Naive thymus-derived CD4-positive, alpha-beta T cell (primary cell): ENCODE measurements at regions of chr19 and their contacts with region 1.

Region 1: DNA sequence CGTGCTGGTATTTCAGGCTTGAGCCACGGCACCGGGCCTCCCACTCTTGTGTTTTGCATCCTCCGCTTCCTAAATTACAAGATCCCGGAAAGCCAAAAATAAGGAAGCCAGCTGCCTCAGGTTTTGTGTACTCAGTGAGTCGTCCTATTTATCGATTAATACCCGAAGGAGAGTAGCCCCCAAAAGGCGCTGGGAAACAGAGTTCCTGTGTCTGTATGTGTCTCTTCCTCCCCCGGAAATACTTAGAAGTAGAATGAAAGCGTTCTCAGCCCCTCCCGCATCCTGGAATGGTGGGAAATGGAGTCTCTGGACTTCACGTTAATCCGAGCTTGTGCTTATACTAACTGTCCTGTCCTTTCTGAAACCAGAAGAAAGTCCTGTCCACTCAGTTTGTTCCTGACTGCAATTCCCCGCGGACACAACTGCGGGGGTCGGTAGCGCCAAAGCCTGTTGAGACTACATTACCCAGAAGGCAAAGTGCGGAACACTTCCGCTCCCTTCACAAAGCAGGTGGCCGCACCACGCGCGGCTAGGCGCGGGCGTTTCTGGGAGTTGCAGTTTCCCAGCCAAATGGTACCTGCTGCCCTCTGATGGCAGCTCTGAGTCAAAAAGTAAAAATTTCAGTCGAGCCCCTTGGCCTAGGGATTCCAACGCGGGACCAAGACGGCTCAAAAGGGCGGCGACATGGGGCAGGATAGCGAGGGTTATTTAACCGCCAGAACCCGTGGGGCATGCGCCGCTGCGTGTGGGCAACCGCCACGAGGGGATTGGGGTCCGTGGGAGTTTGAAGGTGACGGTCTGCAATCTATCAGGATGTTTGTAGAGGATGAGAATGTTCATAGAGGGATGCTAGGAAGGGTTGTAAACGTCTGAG is 2.2 kb upstream of the GSK3A start:
- DNase-seq: peak; percentile 76 to 93 (median 90)
- ATAC-seq: peak; percentile 51
- H3K4me3 ChIP-seq: peak overlapping the region; percentile 68
- H3K4me3 Mint-ChIP-seq: peak overlapping the region; percentile 91 to 98 (median 96)
- H3K27ac ChIP-seq: peak overlapping the region; percentile 73
- H3K27ac Mint-ChIP-seq: peak overlapping the region; percentile 84 to 99 (median 96)
- H3K4me1 ChIP-seq: peaks cover 28 to 38% of the 10 kb centered on the region in 2 donors
- H3K4me1 Mint-ChIP-seq: peaks cover 36 to 58% (median 54%) of the 10 kb centered on the region in 7 donors
- H3K27me3 ChIP-seq: no peaks in the 10 kb centered on the region
- H3K27me3 Mint-ChIP-seq: no peaks in the 10 kb centered on the region

Region 2: GRCh38 chr19:41959056-41960053 is 285.2 kb before region 1 on chr19 and contains the start of gene RABAC1:
- CTCF ChIA-PET with region 1: no interaction called
- POLR2A ChIA-PET with region 1: no interaction called
- intact Hi-C with region 1: loop called (anchors 1 to 2 kb)
- DNase-seq: peak; percentile 67 to 91 (median 86)
- ATAC-seq: peak; percentile 95
- H3K4me3 ChIP-seq: peak within 1 kb of the TSS; percentile 78
- H3K4me3 Mint-ChIP-seq: peak within 1 kb of the TSS; percentile 80 to 99 (median 91)
- H3K27ac ChIP-seq: peak within 1 kb of the TSS; percentile 81
- H3K27ac Mint-ChIP-seq: peak within 1 kb of the TSS; percentile 74 to 94 (median 90)
- H3K4me1 ChIP-seq: peaks cover 8 to 9% of the 10 kb centered on the region in 2 donors
- H3K4me1 Mint-ChIP-seq: peaks cover 17 to 22% (median 18%) of the 10 kb centered on the region in 7 donors
- H3K27me3 ChIP-seq: no peaks in the 10 kb centered on the region
- H3K27me3 Mint-ChIP-seq: no peaks in the 10 kb centered on the region
- total RNA-seq, gene RABAC1: 70.4 to 90.9 (median 78.1) TPM

Region 3: DNA sequence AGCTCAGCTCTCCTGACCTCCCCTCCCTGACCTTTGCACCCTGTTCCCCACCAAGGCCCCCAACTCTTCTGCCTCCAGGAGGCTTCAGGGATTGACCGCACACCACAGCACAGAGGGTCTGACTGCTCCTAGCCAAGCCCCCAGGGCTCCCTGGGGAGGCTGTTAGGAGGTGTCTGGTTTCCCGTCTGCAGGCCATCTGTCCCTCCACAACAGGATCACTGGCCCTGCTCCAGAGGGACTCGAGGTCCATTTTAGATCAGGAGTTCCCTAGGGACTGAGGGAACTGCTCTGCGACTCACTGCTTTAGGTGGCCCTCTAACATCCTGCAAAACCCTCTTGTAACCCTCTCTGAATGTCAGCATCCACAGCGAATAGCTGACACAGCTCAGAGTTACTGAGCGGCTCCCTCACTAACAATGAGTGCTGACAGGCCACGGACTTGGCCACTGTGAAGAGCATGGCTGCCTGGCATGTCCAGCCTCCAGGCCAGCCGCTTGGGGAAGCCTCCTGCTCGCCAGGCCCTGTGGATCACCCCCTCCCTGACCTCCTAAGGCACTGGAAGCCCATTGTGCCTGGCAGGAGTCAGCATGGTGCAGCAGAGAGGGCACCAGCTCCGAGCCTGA is 192.2 kb before region 1 on chr19:
- CTCF ChIA-PET with region 1: no interaction called
- POLR2A ChIA-PET with region 1: no interaction called
- intact Hi-C with region 1: no loop called
- DNase-seq: no peak
- ATAC-seq: no peak
- H3K4me3 ChIP-seq: no peak overlapping the region
- H3K4me3 Mint-ChIP-seq: no peak overlapping the region
- H3K27ac ChIP-seq: no peak overlapping the region
- H3K27ac Mint-ChIP-seq: no peak overlapping the region
- H3K4me1 ChIP-seq: peaks cover 0 to 5% of the 10 kb centered on the region in 2 donors
- H3K4me1 Mint-ChIP-seq: peaks cover 5 to 8% (median 7%) of the 10 kb centered on the region in 7 donors
- H3K27me3 ChIP-seq: no peaks in the 10 kb centered on the region
- H3K27me3 Mint-ChIP-seq: no peaks in the 10 kb centered on the region

Region 4: GRCh38 chr19:42176990-42177685 is 67.4 kb before region 1 on chr19:
- CTCF ChIA-PET with region 1: interaction called, 4 read pairs
- POLR2A ChIA-PET with region 1: no interaction called
- intact Hi-C with region 1: loop called in 1 of 2 experiments (anchors 2 kb)
- DNase-seq: peak; percentile 52 to 82 (median 67)
- ATAC-seq: peak; percentile 96
- H3K4me3 ChIP-seq: peak overlapping the region; percentile 41
- H3K4me3 Mint-ChIP-seq: peak overlapping the region in 1 of 10 donors; percentile 12
- H3K27ac ChIP-seq: no peak overlapping the region
- H3K27ac Mint-ChIP-seq: no peak overlapping the region
- H3K4me1 ChIP-seq: peaks cover 12 to 21% of the 10 kb centered on the region in 2 donors
- H3K4me1 Mint-ChIP-seq: peaks cover 16 to 24% (median 19%) of the 10 kb centered on the region in 7 donors
- H3K27me3 ChIP-seq: peaks cover 0 to 11% of the 10 kb centered on the region in 2 donors
- H3K27me3 Mint-ChIP-seq: peaks cover 13 to 34% (median 19%) of the 10 kb centered on the region in 5 donors

Region 5: GRCh38 chr19:42219812-42220750 is 24.5 kb before region 1 on chr19 and contains the start of gene ZNF526:
- CTCF ChIA-PET with region 1: interaction called, 24 read pairs
- POLR2A ChIA-PET with region 1: interaction called, 84 read pairs
- intact Hi-C with region 1: loop called (anchors 1 kb)
- DNase-seq: peak; percentile 92 to 97 (median 96)
- ATAC-seq: peak; percentile 88
- H3K4me3 ChIP-seq: peak within 1 kb of the TSS; percentile 72
- H3K4me3 Mint-ChIP-seq: peak within 1 kb of the TSS; percentile 95 to 99 (median 98)
- H3K27ac ChIP-seq: peak within 1 kb of the TSS; percentile 88
- H3K27ac Mint-ChIP-seq: peak within 1 kb of the TSS; percentile 88 to 98 (median 95)
- H3K4me1 ChIP-seq: peaks cover 37 to 43% of the 10 kb centered on the region in 2 donors
- H3K4me1 Mint-ChIP-seq: peaks cover 46 to 62% (median 55%) of the 10 kb centered on the region in 7 donors
- H3K27me3 ChIP-seq: no peaks in the 10 kb centered on the region
- H3K27me3 Mint-ChIP-seq: peaks cover 0 to 3% (median 0%) of the 10 kb centered on the region in 5 donors
- total RNA-seq, gene ZNF526: 8.6 to 25.2 (median 22.7) TPM

Region 6: DNA sequence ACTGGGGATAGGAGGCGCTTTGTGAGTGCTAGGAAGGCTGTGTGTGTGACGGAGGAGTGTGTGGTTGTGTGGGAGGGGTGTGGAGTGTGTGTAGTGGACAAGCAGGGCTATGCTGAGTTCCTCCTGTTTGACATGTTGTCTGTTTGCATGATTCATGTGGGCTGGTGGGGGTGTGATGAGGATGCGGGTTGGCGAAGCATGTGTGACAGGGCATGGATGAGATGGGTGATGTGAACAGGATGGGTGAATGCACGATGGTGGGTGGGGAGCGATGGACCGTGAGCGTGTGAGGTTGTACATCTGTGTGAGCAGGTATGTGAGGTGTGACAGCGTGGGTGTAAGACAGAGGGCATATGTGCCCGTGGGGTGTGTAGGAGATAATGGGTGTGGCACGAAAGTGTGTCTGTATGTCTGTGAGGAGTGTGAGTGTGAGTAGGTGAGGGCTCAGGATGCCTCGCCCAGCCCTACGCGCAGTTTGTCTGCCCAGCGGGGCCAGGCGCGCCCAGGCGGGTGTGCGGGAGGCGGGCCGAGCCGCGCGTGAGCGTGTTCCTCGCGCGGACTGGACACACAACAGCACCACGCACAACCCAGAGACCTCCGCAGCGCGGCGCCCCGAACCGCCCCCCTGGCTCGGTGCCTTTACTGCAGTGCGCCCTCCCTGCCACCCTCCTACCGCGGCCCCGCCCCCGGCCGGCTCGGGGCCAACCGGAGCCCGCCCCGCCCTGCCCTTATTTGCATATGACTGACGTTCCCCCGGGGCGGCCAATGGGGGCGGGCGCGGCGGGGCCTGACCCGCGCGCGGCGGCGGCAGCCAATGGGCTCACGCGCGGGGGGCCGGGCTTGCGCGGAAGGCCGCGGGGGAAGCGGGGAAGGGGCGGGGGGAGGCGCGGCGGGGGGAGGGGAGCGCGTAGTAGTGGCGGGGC is 38.8 kb after region 1 on chr19:
- CTCF ChIA-PET with region 1: interaction called, 25 read pairs
- POLR2A ChIA-PET with region 1: interaction called, 25 read pairs
- intact Hi-C with region 1: loop called (anchors 1 kb)
- DNase-seq: peak; percentile 93 to 97 (median 95)
- ATAC-seq: peak; percentile 83
- H3K4me3 ChIP-seq: peak overlapping the region; percentile 50
- H3K4me3 Mint-ChIP-seq: peak overlapping the region in 1 of 10 donors; percentile 0
- H3K27ac ChIP-seq: peak overlapping the region; percentile 83
- H3K27ac Mint-ChIP-seq: no peak overlapping the region
- H3K4me1 ChIP-seq: peaks cover 42 to 45% of the 10 kb centered on the region in 2 donors
- H3K4me1 Mint-ChIP-seq: peaks cover 22 to 44% (median 32%) of the 10 kb centered on the region in 7 donors
- H3K27me3 ChIP-seq: no peaks in the 10 kb centered on the region
- H3K27me3 Mint-ChIP-seq: no peaks in the 10 kb centered on the region

Region 7: DNA sequence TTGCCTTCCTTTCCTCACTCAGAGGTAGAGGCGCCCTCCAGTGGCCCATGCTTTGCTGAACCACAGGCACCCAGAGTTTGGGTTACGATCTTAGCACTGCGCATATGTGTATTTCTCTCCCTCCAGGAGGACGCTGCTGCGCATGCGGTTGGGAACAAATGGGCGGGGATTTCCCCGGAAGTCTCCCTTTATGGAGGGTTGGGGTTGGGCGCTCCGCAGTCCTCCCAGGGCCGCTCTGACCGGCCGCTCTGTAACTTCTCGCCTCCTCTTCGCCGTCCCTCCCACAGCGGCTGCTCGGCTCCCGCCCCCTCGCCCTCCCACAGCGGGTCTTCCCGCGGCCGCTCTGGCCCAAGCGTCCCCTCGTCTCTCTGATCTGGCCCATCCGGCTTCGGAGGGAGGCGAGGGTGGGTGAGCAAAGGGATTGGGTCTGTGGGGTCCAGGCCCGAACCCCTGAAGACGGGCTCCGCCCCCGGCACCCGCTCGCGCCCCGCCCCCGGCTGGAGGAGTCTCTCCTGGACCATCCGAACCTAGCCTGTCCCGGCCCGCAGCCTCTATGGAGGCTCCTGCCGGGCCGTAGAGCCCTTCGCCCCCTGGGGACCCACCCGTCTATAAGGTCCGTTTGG is 80.8 kb after region 1 on chr19 and contains the start of gene MEGF8:
- CTCF ChIA-PET with region 1: no interaction called
- POLR2A ChIA-PET with region 1: no interaction called
- intact Hi-C with region 1: loop called (anchors 1 kb)
- DNase-seq: peak; percentile 86 to 99 (median 97)
- ATAC-seq: peak; percentile 96
- H3K4me3 ChIP-seq: peak within 1 kb of the TSS; percentile 95
- H3K4me3 Mint-ChIP-seq: peak within 1 kb of the TSS; percentile 89 to 96 (median 94)
- H3K27ac ChIP-seq: peak within 1 kb of the TSS; percentile 84
- H3K27ac Mint-ChIP-seq: peak within 1 kb of the TSS; percentile 51 to 93 (median 83)
- H3K4me1 ChIP-seq: peaks cover 6 to 7% of the 10 kb centered on the region in 2 donors
- H3K4me1 Mint-ChIP-seq: peaks cover 13 to 29% (median 22%) of the 10 kb centered on the region in 7 donors
- H3K27me3 ChIP-seq: peaks cover 0 to 4% of the 10 kb centered on the region in 2 donors
- H3K27me3 Mint-ChIP-seq: peaks cover 6 to 33% (median 16%) of the 10 kb centered on the region in 5 donors
- total RNA-seq, gene MEGF8: 6.7 to 9.3 (median 8.6) TPM

Region 8: GRCh38 chr19:42594617-42595489 is 350.3 kb after region 1 on chr19 and contains the start of gene CEACAM8:
- CTCF ChIA-PET with region 1: no interaction called
- POLR2A ChIA-PET with region 1: no interaction called
- intact Hi-C with region 1: no loop called
- DNase-seq: no peak
- ATAC-seq: no peak
- H3K4me3 ChIP-seq: no peak within 1 kb of the TSS
- H3K4me3 Mint-ChIP-seq: no peak within 1 kb of the TSS
- H3K27ac ChIP-seq: no peak within 1 kb of the TSS
- H3K27ac Mint-ChIP-seq: no peak within 1 kb of the TSS
- H3K4me1 ChIP-seq: no peaks in the 10 kb centered on the region
- H3K4me1 Mint-ChIP-seq: peaks cover 0 to 6% (median 4%) of the 10 kb centered on the region in 7 donors
- H3K27me3 ChIP-seq: no peaks in the 10 kb centered on the region
- H3K27me3 Mint-ChIP-seq: peaks cover 0 to 16% (median 12%) of the 10 kb centered on the region in 5 donors
- total RNA-seq, gene CEACAM8: 0.59 TPM in 1 of 5 experiments, not detected in the others